PC-3 (cell line): ENCODE measurements at regions of chr12 and their contacts with region 1.

Region 1: DNA sequence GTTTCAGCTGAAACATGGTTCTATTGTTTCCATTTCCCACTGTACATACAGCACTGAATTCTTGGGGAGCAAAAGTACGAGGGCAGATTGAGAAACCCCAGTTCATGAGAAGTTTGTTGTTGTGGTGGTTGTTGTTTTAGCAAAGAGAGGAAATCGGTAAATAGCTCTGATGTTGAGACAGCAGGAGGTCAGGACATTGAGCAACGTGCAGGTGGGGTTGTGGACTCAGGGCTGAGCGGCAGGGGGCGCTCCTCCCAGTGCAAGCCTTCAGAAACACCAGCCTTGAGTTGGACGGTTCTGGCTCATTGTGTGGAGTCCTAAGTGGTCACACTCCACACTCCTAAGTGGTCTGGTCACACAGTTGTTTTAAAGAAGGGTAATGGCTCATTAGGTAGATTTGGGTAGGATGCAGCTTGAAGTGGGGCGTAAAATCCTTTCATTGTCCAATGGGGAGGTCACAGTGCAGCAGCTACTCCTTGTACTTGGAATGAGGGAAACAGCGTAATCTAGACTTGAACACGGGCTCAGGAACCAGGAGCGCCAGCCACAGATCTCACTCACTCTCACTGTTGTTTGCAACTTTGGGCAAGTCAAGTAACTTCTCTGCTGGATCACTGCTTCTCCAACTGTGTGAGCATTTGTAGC is 14.5 kb upstream of the PWP1 start:
- DNase-seq: peak; percentile 20
- ATAC-seq: no peak
- H3K4me3 ChIP-seq: no peak overlapping the region
- H3K27ac ChIP-seq: no peak overlapping the region
- H3K4me1 ChIP-seq: no peaks in the 10 kb centered on the region
- H3K27me3 ChIP-seq: peaks cover 23% of the 10 kb centered on the region
- CTCF ChIP-seq: peak; percentile 78

Region 2: GRCh38 chr12:107884769-107885694 is 213.9 kb after region 1 on chr12:
- CTCF ChIA-PET with region 1: interaction called, 11 read pairs
- POLR2A ChIA-PET with region 1: no interaction called
- intact Hi-C with region 1: loop called (anchors 1 kb)
- DNase-seq: peak; percentile 72
- ATAC-seq: peak; percentile 89
- H3K4me3 ChIP-seq: no peak overlapping the region
- H3K27ac ChIP-seq: no peak overlapping the region
- H3K4me1 ChIP-seq: no peaks in the 10 kb centered on the region
- H3K27me3 ChIP-seq: peaks cover 45% of the 10 kb centered on the region
- CTCF ChIP-seq: peak; percentile 92

Region 3: DNA sequence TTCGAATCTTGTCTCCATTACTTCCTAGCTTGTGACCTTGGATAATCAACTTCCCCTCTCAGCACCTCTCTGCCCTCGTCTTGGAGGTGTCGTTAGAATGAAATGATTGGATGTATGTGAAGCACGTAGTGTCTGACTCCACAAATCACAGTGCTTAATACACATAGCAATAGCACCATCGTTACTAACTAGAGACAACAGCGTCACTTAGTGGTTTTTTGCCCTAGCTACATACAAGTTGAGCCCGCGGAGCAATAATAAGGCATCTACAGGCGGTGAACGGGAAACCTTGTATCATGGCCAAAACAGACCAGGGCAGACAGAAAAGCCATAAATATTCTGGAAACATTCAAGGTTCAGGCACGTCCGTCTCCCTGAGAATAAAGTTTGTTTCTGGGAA is 258.3 kb after region 1 on chr12:
- CTCF ChIA-PET with region 1: no interaction called
- POLR2A ChIA-PET with region 1: interaction called, 5 read pairs
- intact Hi-C with region 1: loop called (anchors 1 kb)
- DNase-seq: peak; percentile 75
- ATAC-seq: peak; percentile 97
- H3K4me3 ChIP-seq: no peak overlapping the region
- H3K27ac ChIP-seq: no peak overlapping the region
- H3K4me1 ChIP-seq: no peaks in the 10 kb centered on the region
- H3K27me3 ChIP-seq: peaks cover 66% of the 10 kb centered on the region
- CTCF ChIP-seq: peak; percentile 84

Region 4: DNA sequence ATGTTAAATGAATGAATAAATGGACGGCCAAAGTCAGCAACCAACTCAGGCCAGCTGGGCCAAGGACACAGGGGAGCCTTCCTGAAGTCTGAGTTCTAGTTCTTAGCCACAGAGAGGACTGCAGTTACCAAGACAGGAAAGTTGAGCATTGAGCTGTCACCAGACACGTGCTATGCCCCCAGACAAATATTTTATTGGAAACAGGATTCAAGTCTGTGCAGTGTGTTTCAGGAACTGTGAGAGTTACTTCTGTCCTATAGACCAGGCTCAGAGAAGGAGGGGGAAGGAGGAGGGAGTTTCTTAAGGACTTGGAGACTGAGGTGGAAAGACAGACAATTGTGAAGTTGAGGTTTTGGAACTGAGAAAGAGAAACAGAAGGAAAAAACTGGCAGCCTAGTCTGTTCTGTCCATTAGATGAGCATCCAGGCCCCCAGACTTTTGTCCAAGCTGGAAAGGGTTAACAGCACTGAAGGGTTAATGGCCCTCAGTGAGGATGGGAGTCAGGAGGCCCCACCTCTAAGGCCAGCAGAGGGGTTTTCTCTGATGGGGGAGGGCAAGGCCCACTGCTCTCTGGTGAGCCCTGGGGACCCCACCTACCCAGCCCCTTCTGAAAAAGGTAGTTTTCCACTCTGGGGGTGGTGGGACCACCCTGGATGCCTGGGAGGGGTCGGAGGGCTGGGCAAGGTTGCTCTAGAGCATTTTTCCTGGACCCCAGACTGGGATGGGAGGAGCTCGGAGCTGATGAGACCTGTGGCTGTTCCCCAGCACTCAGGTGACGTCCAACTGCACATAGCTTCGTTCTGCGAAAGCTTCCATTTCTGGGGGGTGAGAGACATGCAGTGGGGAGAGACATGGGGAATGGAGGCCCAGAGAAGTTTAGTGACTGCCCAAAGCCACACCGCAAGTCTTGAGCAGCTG is 674.9 kb after region 1 on chr12:
- CTCF ChIA-PET with region 1: no interaction called
- POLR2A ChIA-PET with region 1: interaction called, 14 read pairs
- intact Hi-C with region 1: no loop called
- DNase-seq: no peak
- ATAC-seq: no peak
- H3K4me3 ChIP-seq: no peak overlapping the region
- H3K27ac ChIP-seq: no peak overlapping the region
- H3K4me1 ChIP-seq: no peaks in the 10 kb centered on the region
- H3K27me3 ChIP-seq: peaks cover 17% of the 10 kb centered on the region
- CTCF ChIP-seq: no peak